Right ventricle myocardium inferior (tissue), 1 donor: ENCODE measurements at regions of chr21 and their contacts with region 1.

Region 1: GRCh38 chr21:43866260-43866629 is 1.2 kb downstream of the AGPAT3 start:
- DNase-seq: no peak
- ATAC-seq: peak; percentile 42

Region 2: GRCh38 chr21:43929217-43930025 is 63.2 kb after region 1 on chr21:
- intact Hi-C with region 1: loop called (anchors 2 kb)
- DNase-seq: peak; percentile 86
- ATAC-seq: peak; percentile 91